ENCODE measurements at regions of chr11 and their contacts with region 1.

Region 1: GRCh38 chr11:16785520-16786128 is 47.2 kb downstream of the C11orf58 start:
- DNase-seq: peak; percentile 63
- ATAC-seq: peak; percentile 77
- H3K4me3 ChIP-seq: no peak overlapping the region
- H3K27ac ChIP-seq: peak overlapping the region; percentile 45
- H3K4me1 ChIP-seq: peaks cover 53% of the 10 kb centered on the region
- H3K27me3 ChIP-seq: no peaks in the 10 kb centered on the region
- CTCF ChIP-seq: peak; percentile 86
- EP300 ChIP-seq: no peak
- POLR2A ChIP-seq: no peak
- RAD21 ChIP-seq: peak; percentile 64; the same call in 1 of the 2 replicates

Region 2: GRCh38 chr11:15650105-15650938 is 1135.3 kb before region 1 on chr11:
- CTCF ChIA-PET with region 1: no interaction called
- POLR2A ChIA-PET with region 1: no interaction called
- in situ Hi-C with region 1: no loop called
- intact Hi-C with region 1: no loop called
- DNase-seq: peak; percentile 84
- ATAC-seq: peak; percentile 100
- H3K4me3 ChIP-seq: peak overlapping the region in 1 of 3 experiments; percentile 39; a peak in 1 of 6 replicates
- H3K27ac ChIP-seq: no peak overlapping the region
- H3K4me1 ChIP-seq: peaks cover 7% of the 10 kb centered on the region
- H3K27me3 ChIP-seq: peaks cover 0 to 7% of the 10 kb centered on the region in 2 experiments; a peak in 3 of 5 replicates
- CTCF ChIP-seq: peak; percentile 99
- EP300 ChIP-seq: peak; percentile 62 to 85
- POLR2A ChIP-seq: no peak
- RAD21 ChIP-seq: peak; percentile 94

Region 3: GRCh38 chr11:16809886-16810668 is 24.5 kb after region 1 on chr11:
- CTCF ChIA-PET with region 1: no interaction called
- POLR2A ChIA-PET with region 1: no interaction called
- in situ Hi-C with region 1: no loop called
- intact Hi-C with region 1: loop called (anchors 1 kb)
- DNase-seq: no peak
- ATAC-seq: no peak
- H3K4me3 ChIP-seq: no peak overlapping the region
- H3K27ac ChIP-seq: no peak overlapping the region
- H3K4me1 ChIP-seq: peaks cover 45% of the 10 kb centered on the region
- H3K27me3 ChIP-seq: no peaks in the 10 kb centered on the region
- CTCF ChIP-seq: no peak
- EP300 ChIP-seq: no peak
- POLR2A ChIP-seq: no peak
- RAD21 ChIP-seq: no peak

Region 4: DNA sequence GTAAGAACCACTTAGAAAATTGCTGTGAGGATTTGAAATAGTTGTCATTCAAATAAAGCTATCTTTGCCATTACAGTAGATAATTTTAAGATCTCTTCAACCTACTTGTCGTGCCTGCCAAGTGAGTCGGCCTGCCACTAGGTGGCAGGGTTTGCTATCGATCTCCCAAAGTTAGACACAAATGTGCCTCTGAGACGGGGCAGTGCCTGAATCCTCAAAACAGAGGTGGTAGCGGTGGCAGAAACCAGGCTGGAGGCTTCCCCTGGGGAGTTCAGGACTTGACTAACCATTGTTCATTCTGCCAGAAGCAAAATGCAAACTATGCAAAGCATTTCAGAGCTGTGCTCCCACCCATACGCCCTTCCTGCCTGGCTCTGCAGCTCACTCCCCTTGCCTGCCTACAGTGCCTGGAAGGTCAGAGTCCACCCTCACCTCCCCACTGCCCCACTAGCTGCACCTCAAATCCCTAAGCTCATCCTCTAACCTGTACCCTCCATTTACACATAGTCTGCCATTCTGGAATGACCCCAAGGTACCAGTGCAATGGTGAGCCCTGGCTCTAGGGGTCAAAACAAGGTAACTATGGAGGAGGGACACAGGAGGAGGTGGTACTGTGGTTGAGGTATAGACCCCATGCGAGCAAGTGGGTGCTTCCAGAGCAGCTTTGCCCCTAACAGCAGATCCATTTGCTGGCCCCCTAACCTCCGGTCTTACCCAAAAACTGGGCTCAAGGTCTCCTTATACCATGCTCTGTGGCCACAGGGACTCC is 34.9 kb after region 1 on chr11:
- CTCF ChIA-PET with region 1: interaction called, 8 read pairs
- POLR2A ChIA-PET with region 1: no interaction called
- in situ Hi-C with region 1: no loop called
- intact Hi-C with region 1: loop called (anchors 1 kb)
- DNase-seq: peak; percentile 62
- ATAC-seq: peak; percentile 94
- H3K4me3 ChIP-seq: peak overlapping the region in 1 of 3 experiments; percentile 53; a peak in 2 of 6 replicates
- H3K27ac ChIP-seq: peak overlapping the region; percentile 52
- H3K4me1 ChIP-seq: peaks cover 24% of the 10 kb centered on the region
- H3K27me3 ChIP-seq: no peaks in the 10 kb centered on the region
- CTCF ChIP-seq: peak; percentile 82
- EP300 ChIP-seq: no peak
- POLR2A ChIP-seq: no peak
- RAD21 ChIP-seq: peak; percentile 55; the same call in 1 of the 2 replicates

Region 5: DNA sequence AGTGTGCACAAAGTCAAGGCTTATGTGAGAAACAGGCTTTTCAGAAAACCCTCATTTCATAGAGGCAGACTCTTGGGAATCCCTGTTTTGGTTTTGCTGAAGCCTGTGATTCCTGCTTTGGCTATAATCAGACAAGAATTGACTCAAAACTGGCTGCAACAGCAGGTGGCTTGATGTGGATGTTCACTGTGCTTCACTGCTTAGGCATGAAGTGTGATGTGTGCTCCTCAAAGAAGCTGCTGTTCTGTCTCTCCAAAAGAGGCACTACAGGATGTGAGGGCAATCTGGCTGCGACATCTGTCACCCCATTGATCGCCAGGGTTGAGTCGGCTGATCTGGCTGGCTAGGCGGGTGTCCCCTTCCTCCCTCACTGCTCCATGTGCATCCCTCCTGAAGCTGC is 56.4 kb after region 1 on chr11:
- CTCF ChIA-PET with region 1: no interaction called
- POLR2A ChIA-PET with region 1: no interaction called
- in situ Hi-C with region 1: no loop called
- intact Hi-C with region 1: no loop called
- DNase-seq: no peak
- ATAC-seq: no peak
- H3K4me3 ChIP-seq: no peak overlapping the region
- H3K27ac ChIP-seq: no peak overlapping the region
- H3K4me1 ChIP-seq: no peaks in the 10 kb centered on the region
- H3K27me3 ChIP-seq: no peaks in the 10 kb centered on the region
- CTCF ChIP-seq: no peak
- EP300 ChIP-seq: no peak
- POLR2A ChIP-seq: no peak
- RAD21 ChIP-seq: no peak

Region 6: DNA sequence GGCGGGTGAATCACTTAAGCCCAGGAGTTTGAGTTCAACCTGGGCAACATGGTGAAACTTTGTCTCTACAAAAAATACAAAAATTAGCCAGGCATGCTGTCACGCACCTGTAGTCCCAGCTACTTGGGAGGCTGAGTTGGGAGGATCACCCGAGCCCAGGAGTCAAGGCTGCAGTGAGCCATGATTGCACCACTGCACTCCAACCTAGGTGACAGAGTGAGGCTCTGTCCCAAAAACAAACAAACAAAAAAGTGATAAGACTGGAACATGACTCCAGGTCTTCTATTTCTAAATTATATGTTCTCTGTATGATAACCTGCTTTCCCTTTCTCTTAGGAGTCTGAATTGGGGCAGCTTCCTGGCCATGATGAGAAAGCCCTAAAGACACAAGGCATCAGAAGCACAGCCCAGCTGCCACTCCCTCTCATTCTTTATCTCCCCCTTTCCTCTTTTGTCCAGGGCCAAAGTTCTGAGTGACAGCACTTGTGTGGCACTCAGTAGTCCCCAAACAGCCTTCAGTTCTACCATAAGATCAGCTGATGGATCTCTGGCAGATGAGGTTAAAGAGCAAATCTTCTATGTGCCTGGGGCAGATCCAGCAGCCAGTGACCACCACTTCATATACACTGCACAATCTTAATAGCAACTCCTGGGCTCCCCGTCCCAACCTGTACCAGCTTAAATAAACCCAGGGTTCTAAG is 88.8 kb after region 1 on chr11:
- CTCF ChIA-PET with region 1: no interaction called
- POLR2A ChIA-PET with region 1: no interaction called
- in situ Hi-C with region 1: no loop called
- intact Hi-C with region 1: loop called (anchors 1 kb)
- DNase-seq: peak; percentile 52
- ATAC-seq: peak; percentile 92
- H3K4me3 ChIP-seq: no peak overlapping the region
- H3K27ac ChIP-seq: peak overlapping the region; percentile 31
- H3K4me1 ChIP-seq: peaks cover 38% of the 10 kb centered on the region
- H3K27me3 ChIP-seq: no peaks in the 10 kb centered on the region
- CTCF ChIP-seq: no peak
- EP300 ChIP-seq: no peak
- POLR2A ChIP-seq: no peak
- RAD21 ChIP-seq: no peak

Region 7: GRCh38 chr11:16924826-16925560 is 139.4 kb after region 1 on chr11:
- CTCF ChIA-PET with region 1: no interaction called
- POLR2A ChIA-PET with region 1: no interaction called
- in situ Hi-C with region 1: no loop called
- intact Hi-C with region 1: loop called (anchors 10 kb)
- DNase-seq: peak; percentile 78
- ATAC-seq: peak; percentile 89
- H3K4me3 ChIP-seq: peak overlapping the region; percentile 47 to 67 (median 56); a peak in 5 of 6 replicates
- H3K27ac ChIP-seq: no peak overlapping the region
- H3K4me1 ChIP-seq: peaks cover 25% of the 10 kb centered on the region
- H3K27me3 ChIP-seq: no peaks in the 10 kb centered on the region
- CTCF ChIP-seq: no peak
- EP300 ChIP-seq: no peak
- POLR2A ChIP-seq: no peak
- RAD21 ChIP-seq: no peak

Measured in HepG2 (cell line).